Activated naive CD4-positive, alpha-beta T cell treated with anti-CD3 and anti-CD28 coated beads for 36 hours (primary cell): ENCODE measurements at regions of chr1 and their contacts with region 1.

Region 1: GRCh38 chr1:93846211-93846991 is 32.6 kb downstream of the DNTTIP2 start:
- DNase-seq: peak; percentile 75
- H3K4me3 Mint-ChIP-seq: peak overlapping the region; percentile 87
- H3K27ac Mint-ChIP-seq: peak overlapping the region; percentile 92
- H3K4me1 Mint-ChIP-seq: peaks cover 21% of the 10 kb centered on the region
- H3K27me3 Mint-ChIP-seq: no peaks in the 10 kb centered on the region

Region 2: GRCh38 chr1:93021539-93022134 is 824.8 kb before region 1 on chr1:
- CTCF ChIA-PET with region 1: no interaction called
- intact Hi-C with region 1: loop called (anchors 1 kb)
- DNase-seq: no peak
- H3K4me3 Mint-ChIP-seq: no peak overlapping the region
- H3K27ac Mint-ChIP-seq: no peak overlapping the region
- H3K4me1 Mint-ChIP-seq: no peaks in the 10 kb centered on the region
- H3K27me3 Mint-ChIP-seq: peaks cover 1% of the 10 kb centered on the region

Region 3: GRCh38 chr1:93304716-93305138 is 541.7 kb before region 1 on chr1:
- CTCF ChIA-PET with region 1: interaction called, 7 read pairs
- intact Hi-C with region 1: loop called (anchors 2 kb)
- DNase-seq: peak; percentile 67
- H3K4me3 Mint-ChIP-seq: no peak overlapping the region
- H3K27ac Mint-ChIP-seq: no peak overlapping the region
- H3K4me1 Mint-ChIP-seq: no peaks in the 10 kb centered on the region
- H3K27me3 Mint-ChIP-seq: no peaks in the 10 kb centered on the region

Region 4: DNA sequence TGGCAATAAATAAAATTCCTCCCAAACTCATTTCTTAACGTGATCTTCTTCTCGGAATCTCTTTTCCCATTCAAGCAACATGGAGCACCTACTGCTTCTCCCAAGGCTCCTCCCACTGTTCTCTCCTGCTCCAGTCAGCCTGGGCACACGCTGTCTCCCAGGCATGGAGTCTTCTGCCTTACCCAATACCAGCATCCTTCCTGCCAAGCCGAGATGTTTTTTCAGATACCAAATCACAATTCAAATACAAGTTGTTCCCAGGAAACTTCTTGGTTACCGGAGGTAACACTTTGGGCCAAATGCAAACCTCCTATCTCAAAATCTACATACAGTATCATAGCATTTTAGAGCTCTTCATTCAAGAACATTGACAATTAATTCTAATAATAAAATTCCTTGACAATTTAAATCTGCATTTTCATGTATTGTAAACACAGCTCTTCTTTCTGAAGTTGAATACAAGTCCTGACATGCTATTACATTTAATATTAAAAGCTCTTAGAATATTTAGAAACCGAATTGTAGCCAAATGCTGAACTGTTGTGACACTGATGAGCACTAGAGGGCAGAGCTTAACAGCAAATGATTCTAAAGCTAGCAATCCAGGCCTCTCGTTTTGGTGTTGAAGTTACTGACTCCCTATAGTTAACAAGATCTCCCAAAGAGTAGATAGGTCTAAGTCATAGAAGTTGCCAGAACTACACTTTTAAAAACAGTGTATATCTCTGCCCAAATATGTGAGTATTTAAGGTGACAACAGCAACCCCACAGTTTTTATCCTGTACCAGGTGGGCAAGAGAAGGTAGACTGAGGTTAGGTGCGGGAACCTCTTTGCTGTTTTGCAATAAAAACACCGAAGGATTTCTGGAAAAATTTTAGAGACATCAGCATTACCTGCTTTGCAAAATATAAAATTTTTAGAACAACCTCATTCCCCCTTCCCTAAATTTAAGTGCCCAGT is 217.0 kb before region 1 on chr1:
- CTCF ChIA-PET with region 1: interaction called, 101 read pairs
- intact Hi-C with region 1: loop called (anchors 1 kb)
- DNase-seq: peak; percentile 69
- H3K4me3 Mint-ChIP-seq: no peak overlapping the region
- H3K27ac Mint-ChIP-seq: no peak overlapping the region
- H3K4me1 Mint-ChIP-seq: no peaks in the 10 kb centered on the region
- H3K27me3 Mint-ChIP-seq: no peaks in the 10 kb centered on the region

Region 5: DNA sequence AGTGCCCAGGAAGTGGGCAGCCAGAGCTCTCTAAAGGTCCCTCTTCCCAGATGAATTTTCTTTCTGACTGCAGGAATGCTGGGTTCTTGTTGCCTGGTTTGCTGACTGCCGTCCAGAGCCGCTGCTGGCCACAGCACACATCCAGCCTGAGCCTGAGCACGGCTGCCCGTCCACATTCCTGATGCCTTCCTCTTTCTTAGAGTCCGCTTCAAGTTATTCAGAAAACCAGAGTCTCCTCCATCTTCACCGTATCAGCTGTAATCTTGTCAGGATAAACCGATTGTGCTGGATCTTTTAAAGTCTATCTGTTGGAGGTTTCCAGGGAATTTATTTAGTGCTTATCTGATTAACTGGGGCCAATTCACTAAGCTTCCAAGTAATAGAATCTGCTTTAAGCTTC is 80.0 kb before region 1 on chr1:
- CTCF ChIA-PET with region 1: no interaction called
- intact Hi-C with region 1: no loop called
- DNase-seq: no peak
- H3K4me3 Mint-ChIP-seq: no peak overlapping the region
- H3K27ac Mint-ChIP-seq: no peak overlapping the region
- H3K4me1 Mint-ChIP-seq: peaks cover 15% of the 10 kb centered on the region
- H3K27me3 Mint-ChIP-seq: no peaks in the 10 kb centered on the region

Region 6: GRCh38 chr1:93814059-93814794 is 32.2 kb before region 1 on chr1:
- CTCF ChIA-PET with region 1: interaction called, 35 read pairs
- intact Hi-C with region 1: loop called (anchors 1 kb)
- DNase-seq: peak; percentile 74
- H3K4me3 Mint-ChIP-seq: no peak overlapping the region
- H3K27ac Mint-ChIP-seq: no peak overlapping the region
- H3K4me1 Mint-ChIP-seq: peaks cover 19% of the 10 kb centered on the region
- H3K27me3 Mint-ChIP-seq: no peaks in the 10 kb centered on the region

Region 7: GRCh38 chr1:94039514-94039870 is 193.1 kb after region 1 on chr1:
- CTCF ChIA-PET with region 1: interaction called, 5 read pairs
- intact Hi-C with region 1: loop called (anchors 1 kb)
- DNase-seq: peak; percentile 74
- H3K4me3 Mint-ChIP-seq: no peak overlapping the region
- H3K27ac Mint-ChIP-seq: no peak overlapping the region
- H3K4me1 Mint-ChIP-seq: peaks cover 15% of the 10 kb centered on the region
- H3K27me3 Mint-ChIP-seq: peaks cover 26% of the 10 kb centered on the region